ENCODE measurements at regions of chr9 and their contacts with region 1.

Region 1: GRCh38 chr9:15370466-15371447 is 51.9 kb upstream of the SNAPC3 start:
- DNase-seq: no peak
- ATAC-seq: no peak
- H3K4me3 ChIP-seq: no peak overlapping the region
- H3K27ac ChIP-seq: no peak overlapping the region
- H3K4me1 ChIP-seq: peaks cover 0 to 10% (median 0%) of the 10 kb centered on the region in 9 donors
- H3K27me3 ChIP-seq: peaks cover 0 to 11% (median 0%) of the 10 kb centered on the region in 7 donors
- CTCF ChIP-seq: no peak

Region 2: DNA sequence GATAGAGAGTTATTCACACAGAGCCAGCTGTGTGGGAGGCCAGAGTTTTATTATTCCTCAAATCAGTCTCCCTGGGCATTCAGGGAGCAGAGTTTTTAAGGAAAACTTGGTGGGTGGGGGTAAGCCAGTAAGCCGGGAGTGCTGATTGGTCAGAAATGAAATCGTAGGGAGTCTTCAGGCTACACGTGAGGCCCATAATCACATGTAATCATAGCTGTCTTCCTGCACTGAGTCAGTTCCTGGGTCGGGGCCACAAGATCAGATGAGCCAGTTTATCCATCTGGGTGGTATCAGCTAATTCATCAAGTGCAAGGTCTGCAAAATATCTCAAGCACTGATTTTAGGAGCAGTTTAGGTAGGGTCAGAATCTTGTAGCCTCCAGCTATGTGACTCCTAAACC is 52.9 kb before region 1 on chr9:
- intact Hi-C with region 1: loop called in 1 of 10 experiments (anchors 10 kb)
- DNase-seq: no peak
- ATAC-seq: no peak
- H3K4me3 ChIP-seq: no peak overlapping the region
- H3K27ac ChIP-seq: no peak overlapping the region
- H3K4me1 ChIP-seq: no peaks in the 10 kb centered on the region
- H3K27me3 ChIP-seq: no peaks in the 10 kb centered on the region
- CTCF ChIP-seq: no peak

Region 3: GRCh38 chr9:15404171-15404570 is 33.4 kb after region 1 on chr9:
- intact Hi-C with region 1: loop called in 1 of 10 experiments (anchors 1 kb)
- DNase-seq: no peak
- ATAC-seq: no peak
- H3K4me3 ChIP-seq: no peak overlapping the region
- H3K27ac ChIP-seq: no peak overlapping the region
- H3K4me1 ChIP-seq: no peaks in the 10 kb centered on the region
- H3K27me3 ChIP-seq: no peaks in the 10 kb centered on the region
- CTCF ChIP-seq: no peak

Region 4: GRCh38 chr9:15416880-15417279 is 46.1 kb after region 1 on chr9:
- intact Hi-C with region 1: no loop called
- DNase-seq: no peak
- ATAC-seq: peak in 1 of 8 donors; percentile 49
- H3K4me3 ChIP-seq: no peak overlapping the region
- H3K27ac ChIP-seq: no peak overlapping the region
- H3K4me1 ChIP-seq: peaks cover 0 to 4% (median under 1%) of the 10 kb centered on the region in 9 donors
- H3K27me3 ChIP-seq: no peaks in the 10 kb centered on the region
- CTCF ChIP-seq: peak in 7 of 9 donors; percentile 18 to 50 (median 44)

Region 5: DNA sequence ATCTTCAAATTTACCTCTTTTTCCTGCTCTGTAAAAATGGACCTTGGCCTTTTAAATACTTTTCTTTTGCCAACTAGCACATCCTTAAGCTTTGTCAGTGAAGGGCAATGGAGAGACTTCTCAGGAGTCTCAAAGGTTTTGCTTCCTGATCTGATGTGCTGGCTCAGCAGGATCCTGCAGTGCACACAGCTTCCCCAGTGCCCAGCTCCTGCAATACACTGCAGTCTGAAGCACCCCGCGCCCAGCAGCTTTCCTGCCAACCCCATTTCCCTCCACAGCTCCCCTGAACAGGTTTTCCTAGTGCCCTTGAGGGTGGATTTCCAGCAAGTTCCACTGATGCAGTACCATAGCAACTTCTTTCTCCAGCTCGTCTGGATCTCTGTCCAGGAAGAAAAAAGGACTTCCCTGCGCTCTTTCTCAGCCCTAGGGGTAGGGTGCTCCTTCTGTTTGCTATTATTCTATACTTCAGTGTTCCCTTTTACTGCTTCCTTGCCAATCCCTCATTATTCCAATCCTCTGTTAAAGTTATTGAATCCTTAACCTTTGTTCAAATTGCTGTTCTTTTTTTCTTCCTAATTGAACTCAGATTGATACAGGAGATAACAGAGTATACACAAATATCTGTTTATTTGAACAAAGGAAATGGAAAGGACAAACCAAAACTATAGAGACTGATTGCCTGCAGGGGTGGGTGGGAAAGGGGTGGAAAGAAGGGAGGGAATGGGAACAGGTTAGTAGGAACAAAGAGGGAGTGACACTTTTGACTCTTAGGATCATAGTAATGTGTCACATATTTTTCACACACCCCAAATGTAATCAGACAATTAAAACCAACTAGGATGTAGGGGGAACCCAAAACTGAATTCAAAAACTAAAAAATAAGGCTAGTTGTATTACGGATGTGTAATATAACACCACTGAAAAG is 60.4 kb after region 1 on chr9:
- intact Hi-C with region 1: no loop called
- DNase-seq: no peak
- ATAC-seq: peak in 5 of 8 donors; percentile 30 to 56 (median 41)
- H3K4me3 ChIP-seq: no peak overlapping the region
- H3K27ac ChIP-seq: peak overlapping the region in 1 of 10 donors; percentile 34
- H3K4me1 ChIP-seq: peaks cover 0 to 46% (median 27%) of the 10 kb centered on the region in 9 donors
- H3K27me3 ChIP-seq: no peaks in the 10 kb centered on the region
- CTCF ChIP-seq: no peak

Region 6: GRCh38 chr9:15444142-15444541 is 73.4 kb after region 1 on chr9:
- intact Hi-C with region 1: no loop called
- DNase-seq: no peak
- ATAC-seq: no peak
- H3K4me3 ChIP-seq: no peak overlapping the region
- H3K27ac ChIP-seq: peak overlapping the region in 1 of 10 donors; percentile 7
- H3K4me1 ChIP-seq: peaks cover 0 to 10% (median 0%) of the 10 kb centered on the region in 9 donors
- H3K27me3 ChIP-seq: no peaks in the 10 kb centered on the region
- CTCF ChIP-seq: no peak

Region 7: DNA sequence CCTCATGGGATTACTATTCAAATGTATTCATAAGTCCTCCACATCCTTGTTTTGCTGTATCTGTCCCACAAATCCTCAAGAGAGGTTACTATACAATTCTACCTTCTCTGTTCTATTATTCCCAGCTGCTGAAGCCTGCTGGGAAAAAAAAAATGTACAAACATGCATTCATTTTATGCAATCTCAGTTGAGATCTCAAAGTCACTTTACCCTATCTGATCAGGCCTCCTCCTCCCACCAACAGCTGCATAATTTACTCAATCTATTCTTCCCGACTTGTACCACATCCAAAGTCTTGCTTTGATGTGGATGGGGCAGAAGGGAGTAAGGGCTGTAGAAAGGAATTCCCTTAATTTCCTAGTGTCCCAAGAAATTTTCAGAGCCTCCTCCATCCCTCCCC is 111.4 kb after region 1 on chr9:
- intact Hi-C with region 1: no loop called
- DNase-seq: no peak
- ATAC-seq: no peak
- H3K4me3 ChIP-seq: no peak overlapping the region
- H3K27ac ChIP-seq: no peak overlapping the region
- H3K4me1 ChIP-seq: no peaks in the 10 kb centered on the region
- H3K27me3 ChIP-seq: no peaks in the 10 kb centered on the region
- CTCF ChIP-seq: no peak

Measured in heart right ventricle (tissue), 16 donors.